ENCODE measurements at regions of chr16 and their contacts with region 1.

Region 1: GRCh38 chr16:76653390-76654026 is 376.3 kb downstream of the CNTNAP4 start:
- DNase-seq: peak; percentile 8 to 48 (median 22)
- ATAC-seq: peak; percentile 85
- H3K4me3 ChIP-seq: no peak overlapping the region
- H3K27ac ChIP-seq: no peak overlapping the region
- H3K4me1 ChIP-seq: no peaks in the 10 kb centered on the region
- H3K27me3 ChIP-seq: no peaks in the 10 kb centered on the region
- CTCF ChIP-seq: peak; percentile 41 to 65 (median 41); a peak in 5 of 6 replicates
- EP300 ChIP-seq: no peak
- POLR2A ChIP-seq: no peak
- RAD21 ChIP-seq: peak; percentile 60 to 71

Region 2: GRCh38 chr16:75789237-75789636 is 864.3 kb before region 1 on chr16:
- CTCF ChIA-PET with region 1: no interaction called
- POLR2A ChIA-PET with region 1: no interaction called
- in situ Hi-C with region 1: loop called (anchors 10 kb)
- intact Hi-C with region 1: loop called (anchors 5 kb)
- DNase-seq: peak; percentile 39 to 61 (median 49)
- ATAC-seq: peak; percentile 89
- H3K4me3 ChIP-seq: no peak overlapping the region
- H3K27ac ChIP-seq: no peak overlapping the region
- H3K4me1 ChIP-seq: no peaks in the 10 kb centered on the region
- H3K27me3 ChIP-seq: no peaks in the 10 kb centered on the region
- CTCF ChIP-seq: peak; percentile 55 to 89 (median 57); a peak in 5 of 6 replicates
- EP300 ChIP-seq: no peak
- POLR2A ChIP-seq: no peak
- RAD21 ChIP-seq: peak; percentile 78 to 93

Region 3: GRCh38 chr16:75794426-75794825 is 859.1 kb before region 1 on chr16:
- CTCF ChIA-PET with region 1: no interaction called
- POLR2A ChIA-PET with region 1: no interaction called
- in situ Hi-C with region 1: loop called (anchors 10 kb)
- intact Hi-C with region 1: loop called (anchors 5 kb)
- DNase-seq: no peak
- ATAC-seq: no peak
- H3K4me3 ChIP-seq: no peak overlapping the region
- H3K27ac ChIP-seq: no peak overlapping the region
- H3K4me1 ChIP-seq: no peaks in the 10 kb centered on the region
- H3K27me3 ChIP-seq: no peaks in the 10 kb centered on the region
- CTCF ChIP-seq: no peak
- EP300 ChIP-seq: no peak
- POLR2A ChIP-seq: no peak
- RAD21 ChIP-seq: no peak

Region 4: DNA sequence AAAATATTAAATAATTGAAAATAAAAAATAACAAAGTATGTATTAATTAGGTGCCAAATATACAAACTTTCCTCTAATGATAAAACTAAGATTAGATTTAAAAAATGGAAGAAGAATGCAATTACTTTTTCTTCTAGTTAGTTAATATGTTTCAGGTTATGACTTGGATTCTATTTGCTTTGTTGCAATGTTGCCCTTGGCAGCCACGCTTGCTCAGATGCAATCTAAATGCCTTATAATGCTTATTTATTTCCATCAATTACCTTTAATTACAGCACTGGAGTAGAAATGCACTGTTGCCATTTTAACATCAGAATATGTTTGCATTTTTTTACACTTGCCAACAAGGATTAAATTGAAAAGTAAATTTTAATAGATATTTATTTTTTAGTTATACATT is 112.4 kb before region 1 on chr16:
- CTCF ChIA-PET with region 1: no interaction called
- POLR2A ChIA-PET with region 1: no interaction called
- in situ Hi-C with region 1: no loop called
- intact Hi-C with region 1: no loop called
- DNase-seq: no peak
- ATAC-seq: no peak
- H3K4me3 ChIP-seq: no peak overlapping the region
- H3K27ac ChIP-seq: no peak overlapping the region
- H3K4me1 ChIP-seq: no peaks in the 10 kb centered on the region
- H3K27me3 ChIP-seq: no peaks in the 10 kb centered on the region
- CTCF ChIP-seq: no peak
- EP300 ChIP-seq: no peak
- POLR2A ChIP-seq: no peak
- RAD21 ChIP-seq: no peak

Measured in K562 (cell line).